ENCODE measurements at regions of chr7 and their contacts with region 1.

Region 1: DNA sequence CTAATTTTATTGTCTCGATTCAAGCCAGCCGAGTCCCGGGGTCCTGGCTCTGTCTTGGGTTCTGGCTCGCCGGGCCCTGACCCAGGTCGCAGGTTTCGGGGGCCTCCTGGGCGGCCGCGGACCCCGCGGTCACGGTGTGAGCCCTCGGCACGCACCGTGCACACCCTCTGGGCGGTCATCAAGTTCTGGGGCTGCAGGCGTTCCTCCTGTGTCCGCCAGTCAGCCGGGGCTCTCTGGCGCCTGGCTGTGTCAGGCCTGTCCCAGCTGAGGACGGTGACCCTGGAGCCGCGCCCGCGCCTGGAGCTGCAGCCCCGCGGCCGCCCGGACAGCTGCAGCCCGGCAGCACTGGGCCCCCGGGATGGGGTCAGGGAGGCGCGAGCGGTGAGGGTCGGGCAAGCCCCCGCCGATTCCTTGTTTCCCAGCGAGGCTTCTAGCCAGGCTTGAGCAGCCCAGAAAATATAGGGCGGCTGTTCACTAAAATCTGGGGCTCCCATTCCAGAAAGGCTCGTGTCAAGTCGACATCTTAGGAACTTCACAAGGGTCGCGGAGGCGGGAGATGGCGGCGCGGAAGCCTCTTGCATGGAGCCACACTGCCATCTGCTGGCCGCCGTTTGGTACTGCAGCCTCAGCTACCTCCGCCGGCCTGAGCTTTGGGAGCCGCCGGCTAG is 4.2 kb upstream of the HOXA7 start:
- DNase-seq: peak; percentile 87 to 93
- ATAC-seq: peak; percentile 79 to 89 (median 81)
- H3K4me3 ChIP-seq: peak overlapping the region; percentile 67
- H3K4me3 Mint-ChIP-seq: peak overlapping the region; percentile 80
- H3K27ac ChIP-seq: no peak overlapping the region
- H3K27ac Mint-ChIP-seq: peak overlapping the region in 1 of 2 donors; percentile 65
- H3K4me1 ChIP-seq: peaks cover 64% of the 10 kb centered on the region
- H3K4me1 Mint-ChIP-seq: peaks cover 20 to 54% of the 10 kb centered on the region in 2 donors
- H3K27me3 ChIP-seq: peaks cover 66% of the 10 kb centered on the region
- H3K27me3 Mint-ChIP-seq: peaks cover 66 to 74% of the 10 kb centered on the region in 2 donors
- CTCF ChIP-seq: peak; percentile 100

Region 2: DNA sequence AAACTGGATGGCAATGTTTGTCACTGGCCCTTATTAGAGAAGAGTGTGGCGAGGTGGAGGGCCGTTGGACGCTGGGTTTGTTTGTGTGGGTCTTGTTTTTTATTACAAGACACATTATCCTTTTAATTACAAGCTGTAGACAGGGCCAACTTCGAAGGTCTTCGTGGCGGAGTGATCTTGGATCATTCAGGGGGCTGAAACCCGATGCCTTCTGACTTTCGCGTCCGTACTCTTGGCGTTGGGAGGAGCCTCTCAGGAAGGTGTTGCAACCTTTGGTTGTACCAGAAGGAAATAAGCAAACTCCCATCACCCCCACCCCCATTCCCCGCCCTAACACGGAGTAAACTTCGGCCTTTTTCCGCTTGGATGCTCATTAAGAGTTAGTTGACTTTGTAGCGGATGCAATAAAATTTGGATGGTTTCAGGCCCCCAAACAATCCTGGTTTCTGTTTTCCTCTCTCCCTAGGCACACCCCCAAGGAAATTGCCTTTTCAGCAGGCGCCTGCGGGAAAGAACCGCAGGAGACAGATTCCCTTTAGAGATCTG is 1303.2 kb before region 1 on chr7:
- intact Hi-C with region 1: loop called (anchors 2 kb)
- DNase-seq: no peak
- ATAC-seq: no peak
- H3K4me3 ChIP-seq: no peak overlapping the region
- H3K4me3 Mint-ChIP-seq: no peak overlapping the region
- H3K27ac ChIP-seq: no peak overlapping the region
- H3K27ac Mint-ChIP-seq: no peak overlapping the region
- H3K4me1 ChIP-seq: peaks cover 26% of the 10 kb centered on the region
- H3K4me1 Mint-ChIP-seq: peaks cover 9 to 18% of the 10 kb centered on the region in 2 donors
- H3K27me3 ChIP-seq: peaks cover 96% of the 10 kb centered on the region
- H3K27me3 Mint-ChIP-seq: peaks cover 16 to 52% of the 10 kb centered on the region in 2 donors
- CTCF ChIP-seq: no peak

Region 3: GRCh38 chr7:26365077-26365900 is 795.4 kb before region 1 on chr7:
- intact Hi-C with region 1: loop called (anchors 2 kb)
- DNase-seq: peak in 1 of 2 donors; percentile 85
- ATAC-seq: peak; percentile 79 to 88 (median 84)
- H3K4me3 ChIP-seq: no peak overlapping the region
- H3K4me3 Mint-ChIP-seq: no peak overlapping the region
- H3K27ac ChIP-seq: no peak overlapping the region
- H3K27ac Mint-ChIP-seq: peak overlapping the region in 1 of 2 donors; percentile 61
- H3K4me1 ChIP-seq: no peaks in the 10 kb centered on the region
- H3K4me1 Mint-ChIP-seq: peaks cover 5 to 11% of the 10 kb centered on the region in 2 donors
- H3K27me3 ChIP-seq: no peaks in the 10 kb centered on the region
- H3K27me3 Mint-ChIP-seq: no peaks in the 10 kb centered on the region
- CTCF ChIP-seq: peak; percentile 84

Region 4: DNA sequence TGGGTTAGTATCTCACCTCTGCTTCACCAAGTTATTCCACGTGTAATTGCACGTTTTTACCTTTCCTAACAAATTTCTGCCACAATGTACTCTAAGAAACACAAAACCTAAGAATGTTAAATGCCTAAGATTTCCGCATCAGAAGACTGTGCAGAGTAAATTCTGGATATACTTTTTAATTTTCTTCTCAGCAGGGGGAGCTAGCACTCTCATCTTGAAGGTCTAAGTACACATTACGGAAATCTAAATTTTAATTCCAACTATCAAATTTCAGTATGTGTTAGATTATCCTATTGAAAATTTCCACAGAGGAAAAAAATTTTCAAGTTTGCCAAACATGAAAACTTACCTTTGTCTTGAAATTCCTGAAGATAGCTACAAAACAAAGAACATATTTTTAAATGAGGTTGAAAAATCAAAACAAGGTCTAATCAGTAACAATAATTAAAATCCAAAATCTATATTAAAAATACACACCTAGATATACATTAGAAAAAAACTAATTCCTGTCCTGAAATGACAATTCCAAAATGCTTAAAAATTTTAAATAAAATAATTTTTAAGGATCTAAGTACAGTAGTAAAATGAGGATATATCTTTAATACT is 306.8 kb before region 1 on chr7:
- intact Hi-C with region 1: loop called (anchors 1 kb)
- DNase-seq: peak in 1 of 2 donors; percentile 52
- ATAC-seq: peak in 1 of 3 donors; percentile 37
- H3K4me3 ChIP-seq: no peak overlapping the region
- H3K4me3 Mint-ChIP-seq: no peak overlapping the region
- H3K27ac ChIP-seq: no peak overlapping the region
- H3K27ac Mint-ChIP-seq: no peak overlapping the region
- H3K4me1 ChIP-seq: peaks cover 15% of the 10 kb centered on the region
- H3K4me1 Mint-ChIP-seq: peaks cover 18 to 22% of the 10 kb centered on the region in 2 donors
- H3K27me3 ChIP-seq: peaks cover 3% of the 10 kb centered on the region
- H3K27me3 Mint-ChIP-seq: no peaks in the 10 kb centered on the region
- CTCF ChIP-seq: peak; percentile 69

Region 5: DNA sequence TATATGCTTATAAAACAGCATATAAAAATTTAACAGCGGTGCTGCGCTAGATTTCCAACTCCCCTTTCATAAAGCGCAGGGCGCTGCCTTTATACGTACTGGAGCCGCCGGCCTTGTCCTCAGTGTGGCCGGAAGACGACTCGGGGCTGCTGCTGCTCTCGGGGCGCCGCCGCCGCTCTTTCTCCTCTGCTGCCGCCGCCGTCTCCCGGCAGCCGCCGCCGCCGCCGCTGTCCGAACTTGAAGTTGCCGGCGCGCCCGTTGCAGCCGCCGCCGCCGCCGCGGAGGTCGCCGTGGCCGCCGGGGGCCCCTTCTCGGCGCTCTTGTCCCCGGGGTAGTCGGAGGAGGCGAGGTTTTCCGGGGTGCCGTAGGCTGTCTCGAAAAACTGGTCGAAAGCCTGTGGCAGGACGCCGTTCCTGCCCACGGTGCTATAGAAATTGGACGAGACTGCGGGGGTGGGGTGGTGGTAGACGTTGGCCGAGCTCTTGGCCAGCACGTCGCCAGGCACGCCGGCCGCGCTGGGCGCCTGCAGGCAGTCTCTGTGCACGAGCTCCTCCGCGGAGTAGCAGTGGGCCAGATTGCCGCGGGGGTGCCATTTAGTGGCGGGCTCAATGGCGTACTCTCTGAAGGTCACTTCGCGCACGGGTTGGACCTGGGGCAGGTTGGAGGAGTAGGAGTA is 23.8 kb after region 1 on chr7:
- intact Hi-C with region 1: loop called (anchors 2 kb)
- DNase-seq: peak; percentile 29 to 55
- ATAC-seq: peak; percentile 46 to 57 (median 46)
- H3K4me3 ChIP-seq: peak overlapping the region; percentile 30
- H3K4me3 Mint-ChIP-seq: peak overlapping the region; percentile 81
- H3K27ac ChIP-seq: no peak overlapping the region
- H3K27ac Mint-ChIP-seq: peak overlapping the region; percentile 31 to 58
- H3K4me1 ChIP-seq: peaks cover 61% of the 10 kb centered on the region
- H3K4me1 Mint-ChIP-seq: peaks cover 44 to 55% of the 10 kb centered on the region in 2 donors
- H3K27me3 ChIP-seq: peaks cover 89% of the 10 kb centered on the region
- H3K27me3 Mint-ChIP-seq: peaks cover 73 to 80% of the 10 kb centered on the region in 2 donors
- CTCF ChIP-seq: no peak

Region 6: DNA sequence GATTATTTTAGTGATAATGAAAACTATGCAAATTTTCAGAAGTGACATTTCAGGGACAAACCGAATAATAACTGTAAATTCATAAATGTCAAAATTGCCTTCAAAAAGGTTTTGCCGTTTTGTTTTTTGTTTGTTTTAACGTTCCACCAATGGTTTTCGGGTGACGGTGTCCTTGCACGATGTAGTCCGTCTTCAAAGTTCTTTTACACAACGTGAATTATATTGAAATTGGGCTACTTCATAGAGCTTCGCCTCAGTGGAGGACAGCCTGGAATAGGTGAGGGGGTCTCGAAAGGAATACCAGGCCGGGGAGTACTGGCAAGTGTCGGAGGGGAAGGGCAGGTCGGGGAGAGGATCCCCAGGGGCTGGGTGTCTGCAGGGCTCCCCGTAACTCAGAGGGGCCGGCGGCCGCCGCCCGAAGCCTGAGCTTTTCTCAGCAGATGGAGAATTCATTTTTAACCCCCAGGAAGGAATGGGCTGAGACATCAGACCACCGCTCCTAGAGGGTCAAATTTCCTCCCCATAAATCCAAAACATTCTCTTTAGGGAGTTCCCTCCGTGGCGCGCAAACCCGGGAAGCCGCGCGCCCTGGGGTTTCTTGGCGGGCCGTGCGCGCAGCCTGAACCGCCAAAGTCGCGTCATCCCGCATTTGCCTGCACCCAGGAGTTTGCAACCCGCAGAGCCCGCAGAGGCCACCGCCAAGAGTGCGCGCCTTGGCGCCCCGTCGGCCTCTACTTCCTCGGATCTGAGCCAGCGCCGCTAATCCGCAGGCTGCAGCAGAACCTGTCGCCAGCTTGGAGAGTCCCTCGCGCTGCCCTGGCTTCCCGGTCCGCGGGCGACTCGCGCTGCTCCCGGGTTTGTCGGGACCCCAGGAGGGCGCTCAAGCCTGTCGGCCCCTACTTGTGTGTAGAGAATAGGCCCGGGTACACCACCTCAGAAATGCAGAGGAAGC is 64.6 kb after region 1 on chr7:
- intact Hi-C with region 1: no loop called
- DNase-seq: no peak
- ATAC-seq: no peak
- H3K4me3 ChIP-seq: no peak overlapping the region
- H3K4me3 Mint-ChIP-seq: no peak overlapping the region
- H3K27ac ChIP-seq: no peak overlapping the region
- H3K27ac Mint-ChIP-seq: no peak overlapping the region
- H3K4me1 ChIP-seq: peaks cover under 1% of the 10 kb centered on the region
- H3K4me1 Mint-ChIP-seq: peaks cover 8% of the 10 kb centered on the region in 2 donors
- H3K27me3 ChIP-seq: peaks cover 57% of the 10 kb centered on the region
- H3K27me3 Mint-ChIP-seq: peaks cover 54 to 84% of the 10 kb centered on the region in 2 donors
- CTCF ChIP-seq: no peak